MCF 10A (cell line): ENCODE measurements at regions of chr5 and their contacts with region 1.

Region 1: DNA sequence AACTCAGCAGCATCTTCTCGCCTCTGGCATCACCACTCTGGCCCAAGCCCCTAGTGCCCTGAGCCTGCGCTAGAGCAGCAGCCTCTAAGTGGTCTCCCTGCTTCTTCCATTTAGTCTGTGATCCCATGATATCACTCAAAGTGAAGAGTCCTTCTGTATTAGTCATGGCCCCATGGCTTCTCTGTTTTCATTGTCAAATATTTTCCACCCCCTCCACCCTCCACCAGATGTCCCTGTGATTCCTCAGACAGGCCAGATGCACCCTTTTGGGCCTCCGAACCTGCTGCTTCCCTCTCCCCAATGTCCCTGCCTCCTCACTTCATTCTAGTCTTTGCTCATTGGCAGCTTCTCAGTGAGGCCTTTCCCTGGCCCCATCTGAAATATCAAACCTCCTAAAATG is 299.2 kb downstream of the SPOCK1 start:
- DNase-seq: peak; percentile 24
- H3K4me3 Mint-ChIP-seq: no peak overlapping the region
- H3K27ac Mint-ChIP-seq: no peak overlapping the region
- H3K4me1 Mint-ChIP-seq: peaks cover 8% of the 10 kb centered on the region
- H3K27me3 Mint-ChIP-seq: no peaks in the 10 kb centered on the region
- CTCF ChIP-seq: no peak

Region 2: DNA sequence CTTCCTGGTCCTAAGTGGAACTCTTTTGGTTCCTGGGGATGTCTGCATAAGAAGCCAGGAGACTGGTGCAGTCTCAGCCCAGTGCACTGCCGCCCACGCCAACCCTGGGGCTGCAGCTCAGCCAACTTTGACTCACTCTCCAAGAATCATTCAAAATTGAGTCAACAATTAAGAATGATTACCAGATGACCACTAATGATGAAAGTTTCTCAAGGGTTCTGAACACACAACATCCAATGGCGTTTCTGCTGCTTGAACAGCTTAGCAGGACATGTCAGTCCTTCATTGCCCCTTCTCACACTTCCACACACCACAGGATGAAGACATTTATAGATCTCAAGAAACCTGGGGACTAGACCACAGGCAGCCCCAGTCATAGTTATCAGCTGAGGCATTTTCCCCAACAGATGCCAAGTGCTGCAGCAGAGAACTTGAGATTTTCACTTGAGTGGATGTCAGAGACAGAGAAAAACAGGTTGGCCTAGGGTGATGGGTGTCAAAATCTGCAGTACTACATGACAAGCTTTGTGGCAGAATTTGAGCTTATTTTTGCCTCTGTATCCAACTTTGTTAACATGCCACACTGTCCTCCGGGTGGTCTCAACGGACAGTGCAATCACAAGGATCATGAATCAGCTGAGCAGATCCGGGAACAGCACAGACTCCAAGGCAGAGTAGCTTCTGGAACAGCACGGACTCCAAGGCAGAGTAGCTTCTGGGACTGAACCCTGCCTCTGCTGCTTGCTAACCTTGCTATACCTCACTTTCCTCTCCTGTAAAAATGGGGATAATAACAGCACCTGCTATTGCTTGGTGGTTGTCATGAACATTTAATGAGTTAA is 57.0 kb before region 1 on chr5:
- CTCF ChIA-PET with region 1: no interaction called
- POLR2A ChIA-PET with region 1: interaction called, 3 read pairs
- intact Hi-C with region 1: loop called (anchors 10 kb)
- DNase-seq: peak; percentile 87
- H3K4me3 Mint-ChIP-seq: no peak overlapping the region
- H3K27ac Mint-ChIP-seq: peak overlapping the region; percentile 76
- H3K4me1 Mint-ChIP-seq: peaks cover 52% of the 10 kb centered on the region
- H3K27me3 Mint-ChIP-seq: no peaks in the 10 kb centered on the region
- CTCF ChIP-seq: no peak

Region 3: DNA sequence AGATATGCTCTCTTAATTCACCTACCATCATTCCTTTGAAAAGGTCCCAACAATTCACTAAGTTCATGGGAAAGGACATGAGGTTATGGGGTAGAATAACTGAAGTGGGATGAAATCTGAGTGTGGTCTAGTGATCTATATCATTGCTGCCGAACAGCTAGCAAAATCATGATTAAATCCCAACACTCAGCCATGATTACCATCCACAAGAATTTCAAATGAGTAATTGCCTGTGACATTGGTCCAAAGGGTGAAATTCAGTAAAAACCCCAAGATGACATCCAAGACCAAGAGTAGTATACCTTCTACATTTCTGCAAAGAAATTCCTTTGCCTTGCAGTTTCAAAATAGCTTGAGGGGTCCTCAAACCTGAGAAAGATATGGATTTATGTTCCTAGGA is 73.5 kb after region 1 on chr5:
- CTCF ChIA-PET with region 1: no interaction called
- POLR2A ChIA-PET with region 1: no interaction called
- intact Hi-C with region 1: no loop called
- DNase-seq: no peak
- H3K4me3 Mint-ChIP-seq: no peak overlapping the region
- H3K27ac Mint-ChIP-seq: no peak overlapping the region
- H3K4me1 Mint-ChIP-seq: no peaks in the 10 kb centered on the region
- H3K27me3 Mint-ChIP-seq: no peaks in the 10 kb centered on the region
- CTCF ChIP-seq: no peak

Region 4: GRCh38 chr5:137516341-137516740 is 316.4 kb after region 1 on chr5:
- CTCF ChIA-PET with region 1: no interaction called
- POLR2A ChIA-PET with region 1: no interaction called
- intact Hi-C with region 1: no loop called
- DNase-seq: no peak
- H3K4me3 Mint-ChIP-seq: no peak overlapping the region
- H3K27ac Mint-ChIP-seq: no peak overlapping the region
- H3K4me1 Mint-ChIP-seq: no peaks in the 10 kb centered on the region
- H3K27me3 Mint-ChIP-seq: peaks cover 26% of the 10 kb centered on the region
- CTCF ChIP-seq: no peak